Activated naive CD4-positive, alpha-beta T cell treated with anti-CD3 and anti-CD28 coated beads for 36 hours (primary cell): ENCODE measurements at regions of chr5 and their contacts with region 1.

Region 1: DNA sequence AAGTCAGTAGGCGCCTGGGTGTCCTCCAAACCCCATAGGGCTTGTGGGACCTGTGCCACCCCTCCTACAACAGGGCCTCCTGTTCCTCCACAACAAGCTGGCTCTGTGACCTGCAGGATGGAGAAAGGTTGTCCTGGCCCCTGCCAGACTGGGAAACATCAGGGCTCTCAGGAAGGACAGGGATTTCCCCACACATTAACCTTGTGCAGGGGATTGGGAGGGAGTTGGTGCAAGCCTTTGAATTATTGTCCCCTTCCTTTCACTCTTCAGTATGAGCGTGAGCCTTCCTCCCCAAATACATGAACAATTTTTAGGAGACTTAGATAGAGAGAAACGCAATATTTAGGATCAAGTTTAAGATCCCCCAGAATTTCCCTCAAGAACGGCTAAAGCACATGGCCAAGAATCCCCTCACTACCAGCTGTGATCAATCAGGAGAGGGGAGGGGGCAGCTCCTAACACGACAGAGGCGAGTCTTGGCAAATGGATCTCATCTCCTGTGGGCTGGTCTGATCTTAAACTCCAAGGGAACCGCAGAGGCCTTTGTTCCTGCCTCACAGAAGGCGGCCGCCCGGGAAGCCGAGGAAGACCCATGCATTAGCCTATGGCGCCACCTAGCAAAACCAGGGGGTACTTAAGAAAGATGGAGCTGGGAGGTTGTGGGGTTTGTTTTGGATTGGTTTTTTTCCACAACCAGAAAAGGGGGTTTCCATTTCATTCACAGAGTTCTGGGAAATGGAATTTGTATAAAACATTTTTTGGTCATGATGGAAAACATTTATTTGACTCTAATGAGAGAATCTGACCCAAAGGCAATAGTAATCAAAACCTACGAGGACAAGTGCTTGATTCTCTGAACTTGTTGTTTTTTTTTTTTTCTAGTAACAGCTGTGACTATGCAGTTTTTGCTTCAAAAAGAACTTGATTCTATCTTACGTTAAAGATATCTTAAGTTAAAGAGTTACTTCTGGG is 36.1 kb upstream of the OSMR start:
- DNase-seq: peak; percentile 78
- H3K4me3 Mint-ChIP-seq: no peak overlapping the region
- H3K27ac Mint-ChIP-seq: no peak overlapping the region
- H3K4me1 Mint-ChIP-seq: peaks cover 12% of the 10 kb centered on the region
- H3K27me3 Mint-ChIP-seq: peaks cover 30% of the 10 kb centered on the region

Region 2: GRCh38 chr5:38208782-38209378 is 600.8 kb before region 1 on chr5:
- CTCF ChIA-PET with region 1: no interaction called
- intact Hi-C with region 1: loop called (anchors 5 kb)
- DNase-seq: peak; percentile 44
- H3K4me3 Mint-ChIP-seq: no peak overlapping the region
- H3K27ac Mint-ChIP-seq: no peak overlapping the region
- H3K4me1 Mint-ChIP-seq: no peaks in the 10 kb centered on the region
- H3K27me3 Mint-ChIP-seq: peaks cover 28% of the 10 kb centered on the region

Region 3: GRCh38 chr5:38265546-38266179 is 544.0 kb before region 1 on chr5:
- CTCF ChIA-PET with region 1: no interaction called
- intact Hi-C with region 1: loop called (anchors 1 kb)
- DNase-seq: peak; percentile 76
- H3K4me3 Mint-ChIP-seq: no peak overlapping the region
- H3K27ac Mint-ChIP-seq: no peak overlapping the region
- H3K4me1 Mint-ChIP-seq: no peaks in the 10 kb centered on the region
- H3K27me3 Mint-ChIP-seq: peaks cover 52% of the 10 kb centered on the region

Region 4: GRCh38 chr5:38420691-38421390 is 388.8 kb before region 1 on chr5:
- CTCF ChIA-PET with region 1: interaction called, 26 read pairs
- intact Hi-C with region 1: loop called (anchors 1 kb)
- DNase-seq: peak; percentile 65
- H3K4me3 Mint-ChIP-seq: no peak overlapping the region
- H3K27ac Mint-ChIP-seq: no peak overlapping the region
- H3K4me1 Mint-ChIP-seq: no peaks in the 10 kb centered on the region
- H3K27me3 Mint-ChIP-seq: peaks cover 16% of the 10 kb centered on the region

Region 5: DNA sequence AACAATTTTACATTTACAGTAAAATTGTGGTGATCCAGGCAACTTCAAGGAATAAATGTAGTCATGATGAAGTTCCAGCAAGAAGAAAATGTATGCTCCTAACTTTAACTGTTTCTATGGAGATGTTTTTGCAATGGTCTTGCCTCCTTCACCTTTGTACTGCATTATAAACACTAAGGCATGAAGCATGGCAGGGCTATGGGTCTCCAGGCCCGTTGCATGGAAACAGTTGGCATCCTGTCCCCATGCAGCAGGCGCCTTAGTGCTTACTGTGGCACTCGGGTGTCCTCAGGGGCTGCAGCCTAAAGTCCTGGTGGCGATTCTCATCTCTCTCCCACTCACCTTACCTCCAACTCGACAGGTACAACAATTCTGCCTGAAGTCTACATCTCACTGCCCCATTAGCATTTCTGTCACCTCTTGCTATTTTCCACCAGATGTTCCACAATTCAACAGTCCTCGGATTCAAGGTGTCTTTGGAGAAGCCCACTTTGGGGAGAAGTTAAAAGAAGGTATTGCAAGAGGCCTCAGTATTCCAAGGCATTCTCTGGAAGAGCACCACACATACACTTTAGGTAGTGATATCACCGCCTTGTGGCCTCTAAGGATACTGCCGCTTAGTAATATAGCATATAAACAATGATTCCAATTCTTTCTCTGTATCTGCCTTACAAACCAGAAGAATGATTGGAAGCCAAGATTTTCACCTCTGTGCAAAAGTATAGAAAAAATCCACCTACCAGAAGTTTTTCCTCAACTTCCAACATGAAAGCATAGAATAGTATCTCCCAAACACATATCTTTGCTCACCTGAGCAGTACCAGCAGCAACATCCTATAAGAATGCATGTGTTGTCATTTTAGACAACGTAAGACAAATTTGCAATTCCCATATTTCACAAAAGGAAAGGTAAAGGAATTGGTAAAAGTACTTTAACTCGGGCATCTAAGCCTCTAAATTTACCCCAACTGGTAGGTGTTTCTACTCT is 258.4 kb before region 1 on chr5:
- CTCF ChIA-PET with region 1: no interaction called
- intact Hi-C with region 1: loop called (anchors 2 kb)
- DNase-seq: peak; percentile 12
- H3K4me3 Mint-ChIP-seq: no peak overlapping the region
- H3K27ac Mint-ChIP-seq: no peak overlapping the region
- H3K4me1 Mint-ChIP-seq: peaks cover 4% of the 10 kb centered on the region
- H3K27me3 Mint-ChIP-seq: peaks cover 33% of the 10 kb centered on the region